ENCODE measurements at regions of chr1 and their contacts with region 1.

Region 1: DNA sequence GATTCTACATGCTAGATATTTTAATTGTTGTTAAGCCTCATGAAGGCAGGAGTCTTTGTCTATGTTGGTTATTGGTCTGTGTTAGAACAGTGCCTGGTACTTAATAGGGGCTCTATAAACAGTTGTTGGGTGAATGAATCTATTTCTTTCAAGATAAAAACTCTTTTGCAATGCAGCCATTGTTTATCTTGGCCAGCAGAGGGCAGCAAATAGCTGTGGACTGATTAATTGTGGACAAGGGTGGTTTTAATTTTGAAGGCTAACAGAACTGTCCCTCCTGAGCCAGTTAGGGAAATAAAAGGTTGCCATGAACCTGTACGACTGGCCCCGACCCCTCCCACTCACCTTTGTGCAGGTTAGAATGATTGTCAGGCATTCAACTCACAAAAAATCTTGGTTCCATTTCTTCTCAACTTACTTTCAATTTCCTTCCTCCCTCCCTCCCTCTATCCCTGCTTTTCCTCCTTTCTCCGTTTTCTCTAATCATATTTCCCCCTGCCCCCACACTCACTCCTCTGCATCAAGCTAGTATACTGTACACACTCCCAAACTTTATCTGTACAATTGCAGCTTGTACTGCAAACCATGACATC is 66.3 kb upstream of the DIRAS3 start:
- DNase-seq: peak; percentile 66
- H3K4me3 ChIP-seq: no peak overlapping the region
- H3K27ac ChIP-seq: no peak overlapping the region
- H3K4me1 ChIP-seq: peaks cover 11% of the 10 kb centered on the region
- H3K27me3 ChIP-seq: no peaks in the 10 kb centered on the region
- CTCF ChIP-seq: peak; percentile 89
- POLR2A ChIP-seq: no peak

Region 2: DNA sequence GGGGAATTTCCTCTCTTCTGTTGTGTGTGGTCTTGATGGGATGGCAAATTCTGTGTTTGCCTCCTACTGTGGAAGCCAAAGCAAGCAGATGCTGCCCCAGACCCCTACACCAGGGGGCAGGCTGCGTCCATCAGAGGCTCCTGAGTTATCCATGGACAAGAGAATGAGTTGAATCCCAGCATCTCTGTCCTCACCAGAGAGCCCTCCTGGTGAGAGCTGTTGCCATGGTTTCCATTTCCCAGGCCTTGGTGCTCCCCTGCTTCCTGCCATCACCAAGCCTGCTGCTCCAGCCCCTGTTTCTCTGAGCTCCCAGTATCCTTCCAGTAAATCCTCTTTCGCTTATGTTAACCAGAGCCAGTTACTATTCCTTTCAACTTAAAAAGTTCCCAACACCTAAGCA is 263.0 kb before region 1 on chr1:
- intact Hi-C with region 1: loop called (anchors 10 kb)
- DNase-seq: peak; percentile 80
- H3K4me3 ChIP-seq: no peak overlapping the region
- H3K27ac ChIP-seq: no peak overlapping the region
- H3K4me1 ChIP-seq: no peaks in the 10 kb centered on the region
- H3K27me3 ChIP-seq: no peaks in the 10 kb centered on the region
- CTCF ChIP-seq: peak; percentile 49 to 51 (median 50)
- POLR2A ChIP-seq: no peak

Region 3: GRCh38 chr1:68344208-68344607 is 227.5 kb after region 1 on chr1:
- intact Hi-C with region 1: loop called (anchors 5 kb)
- DNase-seq: no peak
- H3K4me3 ChIP-seq: no peak overlapping the region
- H3K27ac ChIP-seq: no peak overlapping the region
- H3K4me1 ChIP-seq: no peaks in the 10 kb centered on the region
- H3K27me3 ChIP-seq: no peaks in the 10 kb centered on the region
- CTCF ChIP-seq: no peak
- POLR2A ChIP-seq: no peak

Measured in testis (tissue), 5 donors.